Posterior vena cava (tissue), 2 donors: ENCODE measurements at regions of chr1 and their contacts with region 1.

Region 1: DNA sequence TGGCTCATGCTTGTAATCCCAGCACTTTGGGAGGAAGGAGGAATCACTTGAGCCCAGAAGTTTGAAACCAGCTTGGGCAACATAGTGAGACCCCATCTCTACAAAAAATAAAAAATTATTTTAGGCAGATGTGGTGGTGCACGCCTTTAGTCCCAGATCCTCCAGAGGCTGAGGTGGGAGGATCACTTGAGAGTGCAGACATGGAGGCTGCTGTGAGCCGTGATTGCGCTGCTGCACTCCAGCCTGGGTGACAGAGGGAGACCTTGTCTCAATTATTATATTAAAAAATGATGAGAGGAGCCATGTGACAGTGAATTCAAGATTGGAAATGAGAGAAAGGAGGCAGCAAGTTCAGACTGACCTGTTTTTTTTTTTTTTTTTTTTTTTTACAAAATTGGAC is 282.3 kb downstream of the ZP4 start:
- DNase-seq: no peak

Region 2: DNA sequence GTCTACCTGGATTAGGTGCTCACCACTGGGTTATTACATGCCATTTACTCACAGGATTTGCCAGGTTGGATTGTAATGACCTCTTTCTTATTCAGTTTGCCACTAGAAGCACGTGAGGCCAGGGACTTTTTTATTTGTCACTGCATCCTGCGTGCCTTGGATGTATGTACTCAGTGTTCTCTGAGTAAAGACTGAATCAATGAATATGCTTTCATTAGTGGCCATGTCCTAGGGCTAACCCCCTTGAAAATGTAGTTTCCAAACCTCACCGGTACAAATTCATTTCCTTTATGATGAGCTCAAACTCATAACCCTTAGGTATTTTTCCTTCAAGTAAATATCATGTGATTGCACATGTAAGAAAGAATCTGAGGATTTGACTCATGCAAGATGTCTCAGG is 283.5 kb after region 1 on chr1:
- intact Hi-C with region 1: loop called in 1 of 2 experiments (anchors 5 kb)
- DNase-seq: no peak